ENCODE measurements at regions of chr13 and their contacts with region 1.

Region 1: GRCh38 chr13:106083620-106084350 is 451.7 kb downstream of the EFNB2 start:
- DNase-seq: peak; percentile 31 to 40
- H3K4me3 ChIP-seq: no peak overlapping the region
- H3K27ac ChIP-seq: no peak overlapping the region
- H3K4me1 ChIP-seq: no peaks in the 10 kb centered on the region
- H3K27me3 ChIP-seq: no peaks in the 10 kb centered on the region
- CTCF ChIP-seq: peak in 5 of 6 experiments; percentile 21 to 65 (median 57)
- POLR2A ChIP-seq: no peak

Region 2: DNA sequence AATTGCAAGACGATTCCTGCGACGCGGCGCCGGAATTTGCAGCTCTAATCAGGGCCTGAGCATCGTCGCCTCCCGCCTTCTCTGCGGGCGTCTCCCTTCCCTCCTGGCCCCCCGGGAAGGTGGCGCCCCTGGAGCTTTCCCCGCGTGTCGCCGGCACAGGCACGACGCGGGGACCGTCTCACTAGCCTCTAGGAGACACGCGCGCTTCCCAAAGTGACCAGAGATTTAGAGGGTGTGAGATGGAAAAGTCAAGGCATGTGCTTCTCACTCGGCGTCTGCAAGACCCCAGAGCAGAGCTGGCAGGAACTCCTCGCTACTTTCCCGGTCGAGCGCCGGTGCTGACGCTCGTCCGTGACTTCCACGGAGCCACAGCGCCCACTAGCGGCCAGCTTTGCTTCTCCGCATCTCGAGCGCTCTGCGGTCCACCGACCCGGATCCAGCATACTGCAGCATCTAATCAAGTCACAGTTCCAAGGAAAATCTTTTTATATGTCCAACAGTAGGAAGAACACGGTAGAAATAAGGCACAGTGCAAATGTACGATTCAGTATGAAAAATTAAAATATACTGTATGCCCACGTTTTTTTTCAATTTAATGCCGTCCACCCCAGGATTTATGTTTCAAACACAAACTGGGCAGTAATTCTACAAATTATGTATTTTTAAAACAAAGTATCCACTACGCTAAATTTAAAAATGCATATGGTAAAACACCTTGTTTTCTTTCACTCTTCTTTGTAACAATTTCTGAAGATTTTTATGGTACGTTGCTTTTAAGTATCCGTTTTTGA is 452.7 kb after region 1 on chr13:
- intact Hi-C with region 1: loop called (anchors 10 kb)
- DNase-seq: peak; percentile 89 to 93
- H3K4me3 ChIP-seq: peak overlapping the region; percentile 43 to 86 (median 68)
- H3K27ac ChIP-seq: peak overlapping the region in 2 of 3 donors; percentile 19 to 59
- H3K4me1 ChIP-seq: peaks cover 0 to 6% of the 10 kb centered on the region in 2 donors
- H3K27me3 ChIP-seq: no peaks in the 10 kb centered on the region
- CTCF ChIP-seq: peak; percentile 83 to 96 (median 93)
- POLR2A ChIP-seq: no peak